Body of pancreas (tissue), 4 donors: ENCODE measurements at regions of chr16 and their contacts with region 1.

Region 1: GRCh38 chr16:2023098-2023925 is 3.4 kb upstream of the NHERF2 start:
- DNase-seq: peak; percentile 93 to 96 (median 95)
- ATAC-seq: peak; percentile 91
- H3K4me3 ChIP-seq: no peak overlapping the region
- H3K27ac ChIP-seq: peak overlapping the region in 2 of 4 donors; percentile 55 to 58
- H3K4me1 ChIP-seq: peaks cover 50% of the 10 kb centered on the region
- H3K27me3 ChIP-seq: peaks cover 0 to 10% of the 10 kb centered on the region in 2 donors
- CTCF ChIP-seq: peak; percentile 97 to 99 (median 99)
- POLR2A ChIP-seq: peak in 2 of 3 donors; percentile 24 to 29

Region 2: GRCh38 chr16:2082160-2082982 is 59.1 kb after region 1 on chr16:
- intact Hi-C with region 1: loop called (anchors 10 kb)
- DNase-seq: peak; percentile 73 to 96 (median 94)
- ATAC-seq: peak; percentile 82
- H3K4me3 ChIP-seq: no peak overlapping the region
- H3K27ac ChIP-seq: peak overlapping the region; percentile 60 to 74 (median 69)
- H3K4me1 ChIP-seq: peaks cover 16% of the 10 kb centered on the region
- H3K27me3 ChIP-seq: no peaks in the 10 kb centered on the region
- CTCF ChIP-seq: peak in 5 of 7 experiments; percentile 11 to 63 (median 51)
- POLR2A ChIP-seq: peak; percentile 43 to 74 (median 59)